ENCODE measurements at regions of chr3 and their contacts with region 1.

Region 1: DNA sequence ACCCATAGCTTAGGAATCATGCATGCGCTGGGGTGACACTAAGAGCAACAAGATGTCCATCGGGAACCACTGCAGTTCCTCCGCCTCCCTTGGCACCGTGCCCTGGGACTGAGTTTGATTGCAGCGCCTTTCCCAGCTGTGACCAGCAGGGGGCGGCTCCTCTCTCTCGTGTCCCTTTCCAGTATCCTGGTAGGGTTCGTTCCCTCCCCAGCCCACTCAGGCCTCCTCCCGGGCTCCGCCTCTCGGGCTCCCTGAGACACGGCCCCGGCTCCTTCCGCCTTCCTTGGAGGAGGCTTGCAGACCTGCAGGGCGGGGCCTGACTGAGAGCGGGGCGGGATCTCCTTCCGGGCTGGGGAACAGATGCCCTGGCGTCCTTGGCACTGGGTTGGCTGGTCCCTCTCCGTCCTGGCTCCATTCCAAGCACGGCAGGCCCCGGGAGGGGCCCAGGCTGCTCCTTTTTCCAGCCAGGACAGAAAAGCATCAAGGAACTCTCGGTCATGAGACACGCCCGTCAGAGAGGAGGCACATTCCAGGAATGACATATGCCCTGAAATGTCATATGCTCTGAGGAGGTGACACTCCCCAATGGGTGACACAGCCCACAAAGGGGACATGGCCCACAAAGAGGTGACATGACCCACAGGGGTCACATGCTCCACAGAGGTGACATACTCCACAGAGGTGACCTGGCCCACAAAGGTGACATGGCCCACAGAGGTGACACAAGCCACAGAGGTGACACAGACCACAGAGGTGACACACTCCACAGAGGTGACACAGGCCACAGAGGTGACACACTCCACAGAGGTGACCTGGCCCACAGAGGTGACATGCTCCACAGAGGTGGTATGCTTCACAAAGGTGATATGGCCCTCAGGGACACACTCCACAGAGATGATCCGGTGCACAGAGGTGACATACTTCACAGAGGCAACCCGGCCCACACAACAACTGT is 79.0 kb downstream of the ABHD5 start:
- DNase-seq: peak in 1 of 2 donors; percentile 96
- H3K4me3 ChIP-seq: peak overlapping the region; percentile 11 to 31
- H3K27ac ChIP-seq: peak overlapping the region; percentile 81
- H3K4me1 ChIP-seq: peaks cover 36% of the 10 kb centered on the region
- H3K27me3 ChIP-seq: no peaks in the 10 kb centered on the region
- CTCF ChIP-seq: peak; percentile 55 to 86 (median 72)
- POLR2A ChIP-seq: no peak

Region 2: GRCh38 chr3:43690400-43691119 is 79.2 kb before region 1 on chr3 and contains the start of gene ABHD5:
- intact Hi-C with region 1: loop called (anchors 5 kb)
- DNase-seq: peak; percentile 94 to 97
- H3K4me3 ChIP-seq: peak within 1 kb of the TSS; percentile 54 to 88
- H3K27ac ChIP-seq: peak within 1 kb of the TSS; percentile 94
- H3K4me1 ChIP-seq: peaks cover 33% of the 10 kb centered on the region
- H3K27me3 ChIP-seq: no peaks in the 10 kb centered on the region
- CTCF ChIP-seq: no peak
- POLR2A ChIP-seq: peak in 1 of 2 donors; percentile 98
- total RNA-seq, gene ABHD5: 34.1 TPM

Region 3: DNA sequence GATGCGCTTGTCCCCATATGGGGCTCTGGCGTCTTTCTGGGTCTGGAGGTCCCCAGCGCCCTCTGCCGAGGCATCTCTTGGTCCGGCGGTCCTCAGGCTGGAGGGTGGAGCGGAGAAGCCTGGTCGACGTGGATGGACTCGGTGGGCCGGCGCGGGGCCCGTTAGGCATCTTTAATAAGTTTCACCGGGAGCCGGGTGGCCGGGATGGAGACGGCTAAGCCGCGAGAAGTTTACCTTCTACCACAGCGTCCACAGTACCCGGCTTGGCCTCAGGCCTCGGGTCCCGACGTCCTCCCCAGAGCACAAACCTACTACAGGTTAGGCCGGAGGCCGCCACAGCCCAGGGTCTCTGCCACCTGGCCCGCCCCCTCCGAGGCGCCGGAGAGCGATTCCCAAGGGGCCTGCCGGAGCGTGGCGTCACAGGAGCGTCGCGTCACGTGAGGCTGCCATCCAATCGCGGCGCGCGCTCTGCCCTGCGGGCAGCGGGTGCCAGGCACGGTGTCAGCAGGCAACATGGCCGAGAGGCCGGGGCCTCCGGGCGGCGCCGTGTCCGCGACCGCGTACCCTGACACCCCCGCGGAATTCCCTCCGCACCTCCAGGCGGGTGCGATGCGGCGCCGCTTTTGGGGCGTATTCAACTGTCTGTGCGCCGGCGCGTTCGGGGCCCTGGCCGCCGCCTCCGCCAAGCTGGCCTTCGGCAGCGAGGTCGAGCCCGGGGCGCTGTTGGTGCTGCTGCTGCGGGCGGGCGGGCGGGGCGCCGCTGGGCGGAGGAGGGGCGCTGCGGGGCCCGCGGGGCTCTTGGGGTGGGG is 1091.9 kb after region 1 on chr3 and contains the start of gene TMEM42:
- intact Hi-C with region 1: loop called (anchors 10 kb)
- DNase-seq: no peak
- H3K4me3 ChIP-seq: peak within 1 kb of the TSS; percentile 74 to 96
- H3K27ac ChIP-seq: peak within 1 kb of the TSS; percentile 97
- H3K4me1 ChIP-seq: peaks cover 21% of the 10 kb centered on the region
- H3K27me3 ChIP-seq: no peaks in the 10 kb centered on the region
- CTCF ChIP-seq: no peak
- POLR2A ChIP-seq: peak in 1 of 2 donors; percentile 76
- total RNA-seq, gene TMEM42: 10.8 TPM

Region 4: DNA sequence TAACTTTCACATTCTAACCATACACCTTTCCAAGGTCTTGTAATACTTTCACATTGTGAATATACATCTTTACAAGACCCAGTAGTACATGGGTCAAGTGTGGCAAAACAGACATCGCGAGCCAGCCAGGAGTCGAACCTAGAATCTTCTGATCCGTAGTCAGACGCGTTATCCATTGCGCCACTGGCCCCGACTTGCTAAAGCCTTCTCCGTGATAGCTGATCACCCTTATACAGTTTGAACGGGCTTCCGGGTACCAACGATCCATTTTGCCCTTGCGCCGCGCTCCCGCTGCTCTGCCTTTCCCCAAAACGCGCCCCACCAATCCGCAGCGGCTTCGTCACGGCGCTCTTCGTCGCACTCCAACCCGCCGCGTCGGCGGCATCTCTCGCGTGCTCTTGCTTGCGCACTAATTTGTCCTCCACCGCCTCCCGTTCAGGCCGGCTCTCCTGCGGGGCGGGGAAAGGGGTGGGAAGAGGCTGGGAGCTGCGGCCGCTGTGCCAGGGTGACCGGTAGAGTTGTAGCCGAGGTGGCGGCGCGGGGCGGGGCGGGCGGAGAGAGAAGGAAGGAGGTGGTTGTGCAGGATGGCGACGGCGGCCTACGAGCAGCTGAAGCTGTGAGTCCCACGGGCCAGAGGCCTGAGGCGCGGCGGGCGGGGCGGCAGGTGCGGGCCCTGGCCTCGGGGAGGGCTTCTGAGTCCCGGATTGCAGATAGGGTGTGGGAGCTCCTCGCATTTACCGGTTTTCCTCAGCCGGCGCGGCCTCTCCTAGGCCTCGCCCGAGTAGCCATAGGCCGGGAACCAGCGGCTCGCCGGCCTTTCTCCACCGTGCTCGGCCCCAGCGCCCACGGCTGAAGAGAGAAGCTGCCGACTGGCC is 1919.4 kb after region 1 on chr3 and contains the start of gene SACM1L:
- intact Hi-C with region 1: no loop called
- DNase-seq: peak in 1 of 2 donors; percentile 100
- H3K4me3 ChIP-seq: peak within 1 kb of the TSS; percentile 81 to 84
- H3K27ac ChIP-seq: peak within 1 kb of the TSS; percentile 87
- H3K4me1 ChIP-seq: peaks cover 43% of the 10 kb centered on the region
- H3K27me3 ChIP-seq: no peaks in the 10 kb centered on the region
- CTCF ChIP-seq: no peak
- POLR2A ChIP-seq: peak in 1 of 2 donors; percentile 41
- total RNA-seq, gene SACM1L: 32.7 TPM